Cardiac septum (tissue), 1 donor: ENCODE measurements at regions of chr3 and their contacts with region 1.

Region 1: DNA sequence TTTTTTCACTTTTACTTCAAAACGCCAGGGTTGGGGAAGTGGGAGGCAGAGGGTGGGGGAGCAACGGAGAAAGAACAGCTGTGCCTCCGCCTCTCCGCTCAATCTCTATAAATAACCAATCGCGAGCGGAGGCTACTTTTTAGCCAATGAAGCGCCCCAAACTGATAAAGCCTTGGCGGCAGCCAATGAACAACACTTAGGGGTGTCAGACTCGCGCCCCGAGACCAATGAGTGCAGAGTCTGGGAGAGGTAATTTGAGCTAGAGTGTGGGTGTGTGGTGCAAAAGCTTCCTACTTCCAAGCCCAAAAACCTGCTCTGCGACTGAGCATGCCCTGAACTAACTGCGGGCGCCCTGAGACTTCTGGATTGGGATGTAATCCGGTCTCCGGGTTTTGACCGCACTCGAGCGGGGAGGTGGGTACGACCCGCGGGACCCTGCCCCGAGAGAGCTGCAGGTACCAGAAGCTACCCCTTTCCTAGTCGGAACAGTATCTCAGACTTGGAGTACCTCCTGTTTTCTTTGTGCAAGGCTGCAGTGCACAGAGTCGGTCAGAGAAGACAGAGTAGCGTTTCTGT is 800 bp upstream of the RAP2B start:
- DNase-seq: peak; percentile 95

Region 2: GRCh38 chr3:153043729-153044328 is 117.4 kb before region 1 on chr3:
- intact Hi-C with region 1: loop called (anchors 5 kb)
- DNase-seq: no peak

Region 3: GRCh38 chr3:153291056-153291685 is 129.9 kb after region 1 on chr3:
- intact Hi-C with region 1: loop called (anchors 1 kb)
- DNase-seq: no peak

Region 4: DNA sequence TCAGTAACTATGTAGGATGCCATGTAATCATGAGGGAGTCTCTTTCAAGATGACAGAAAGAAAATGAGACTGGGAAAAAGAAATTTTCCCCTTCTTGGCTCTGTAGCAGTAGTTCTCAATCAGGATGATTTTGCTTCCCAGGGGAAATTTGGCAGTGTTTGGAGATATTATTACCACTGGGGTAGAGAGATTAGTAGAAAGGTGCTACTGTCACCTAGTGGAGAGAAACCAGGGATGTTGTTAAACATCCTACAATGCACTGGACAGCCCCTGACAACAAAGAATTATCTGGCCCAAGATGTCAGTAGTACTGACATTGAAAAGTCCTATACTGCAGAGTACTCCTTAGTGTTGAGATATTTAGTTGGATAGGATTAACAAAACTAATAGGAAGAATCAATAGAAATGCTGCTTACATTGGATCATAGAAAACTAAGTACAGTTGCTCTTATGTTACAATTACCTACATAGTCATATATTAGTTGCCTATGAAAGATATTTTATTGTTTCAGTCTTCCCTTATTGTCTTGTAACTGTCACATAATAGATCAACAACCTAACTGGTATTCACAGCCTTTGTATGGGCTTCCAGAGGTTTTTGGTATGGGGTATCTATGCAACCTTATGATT is 434.1 kb after region 1 on chr3:
- intact Hi-C with region 1: loop called (anchors 10 kb)
- DNase-seq: no peak

Region 5: GRCh38 chr3:153621953-153622352 is 460.7 kb after region 1 on chr3:
- intact Hi-C with region 1: loop called (anchors 10 kb)
- DNase-seq: no peak